Activated CD4-positive, alpha-beta T cell treated with anti-CD3 and anti-CD28 coated beads, Interleukin-2, amount 10 ng/mL, durations not matched to agents 24 days and 14 days (primary cell): ENCODE measurements at regions of chr6 and their contacts with region 1.

Region 1: DNA sequence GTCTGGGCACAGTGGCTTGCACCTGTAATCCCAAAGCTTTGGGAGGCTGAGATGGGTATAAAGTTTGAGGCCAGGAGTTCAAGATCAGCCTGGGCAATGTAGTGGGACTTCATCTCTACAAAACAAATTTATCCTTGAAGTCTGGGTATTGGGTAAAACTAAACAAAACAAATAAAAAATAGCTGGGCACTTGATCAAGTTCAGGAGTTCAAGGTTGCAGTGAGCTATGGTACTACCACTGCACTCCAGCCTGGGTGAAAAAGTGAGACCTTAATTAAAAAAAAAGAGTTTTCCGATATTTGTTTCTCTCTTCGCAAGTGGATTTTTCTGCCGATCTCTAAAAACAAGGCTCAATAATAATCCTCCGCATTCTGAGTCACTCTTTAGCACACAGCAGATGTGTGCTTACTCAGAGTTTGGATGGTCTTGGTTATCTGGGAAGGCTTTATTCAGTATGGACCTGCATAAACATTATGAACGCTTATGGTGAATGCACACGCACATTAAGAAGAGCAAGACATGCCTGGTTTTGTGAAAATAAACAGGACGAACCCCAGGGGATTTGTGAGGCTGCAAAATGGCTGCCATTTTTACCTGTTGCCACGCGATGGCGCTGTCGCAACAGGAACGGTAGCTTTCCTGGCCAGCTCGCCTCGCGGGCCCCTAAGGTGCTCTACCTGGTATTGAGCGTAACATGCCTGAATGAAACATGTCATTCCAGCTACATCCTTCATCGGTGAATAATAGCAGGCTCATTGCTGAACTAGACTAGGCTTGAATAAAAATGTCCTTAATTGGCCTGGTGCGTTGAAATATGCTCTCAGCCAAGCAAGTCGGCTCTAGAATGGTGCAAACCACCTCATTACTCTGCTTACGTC is 6.0 kb downstream of the OPN5 start:
- DNase-seq: peak; percentile 85
- H3K4me3 Mint-ChIP-seq: no peak overlapping the region
- H3K27ac Mint-ChIP-seq: no peak overlapping the region
- H3K4me1 Mint-ChIP-seq: peaks cover 4% of the 10 kb centered on the region
- H3K27me3 Mint-ChIP-seq: peaks cover 44% of the 10 kb centered on the region

Region 2: GRCh38 chr6:47952640-47953039 is 164.8 kb after region 1 on chr6:
- intact Hi-C with region 1: no loop called
- DNase-seq: no peak
- H3K4me3 Mint-ChIP-seq: no peak overlapping the region
- H3K27ac Mint-ChIP-seq: no peak overlapping the region
- H3K4me1 Mint-ChIP-seq: no peaks in the 10 kb centered on the region
- H3K27me3 Mint-ChIP-seq: no peaks in the 10 kb centered on the region

Region 3: GRCh38 chr6:48764286-48764685 is 976.4 kb after region 1 on chr6:
- intact Hi-C with region 1: loop called (anchors 5 kb)
- DNase-seq: no peak
- H3K4me3 Mint-ChIP-seq: no peak overlapping the region
- H3K27ac Mint-ChIP-seq: no peak overlapping the region
- H3K4me1 Mint-ChIP-seq: no peaks in the 10 kb centered on the region
- H3K27me3 Mint-ChIP-seq: no peaks in the 10 kb centered on the region

Region 4: GRCh38 chr6:49409951-49410542 is 1622.2 kb after region 1 on chr6:
- intact Hi-C with region 1: loop called (anchors 2 kb)
- DNase-seq: peak; percentile 86
- H3K4me3 Mint-ChIP-seq: no peak overlapping the region
- H3K27ac Mint-ChIP-seq: no peak overlapping the region
- H3K4me1 Mint-ChIP-seq: no peaks in the 10 kb centered on the region
- H3K27me3 Mint-ChIP-seq: peaks cover 2% of the 10 kb centered on the region

Region 5: GRCh38 chr6:49764571-49765236 is 1976.8 kb after region 1 on chr6:
- intact Hi-C with region 1: no loop called
- DNase-seq: no peak
- H3K4me3 Mint-ChIP-seq: no peak overlapping the region
- H3K27ac Mint-ChIP-seq: no peak overlapping the region
- H3K4me1 Mint-ChIP-seq: no peaks in the 10 kb centered on the region
- H3K27me3 Mint-ChIP-seq: no peaks in the 10 kb centered on the region